CD8-positive, alpha-beta memory T cell (primary cell): ENCODE measurements at regions of chr12 and their contacts with region 1.

Region 1: DNA sequence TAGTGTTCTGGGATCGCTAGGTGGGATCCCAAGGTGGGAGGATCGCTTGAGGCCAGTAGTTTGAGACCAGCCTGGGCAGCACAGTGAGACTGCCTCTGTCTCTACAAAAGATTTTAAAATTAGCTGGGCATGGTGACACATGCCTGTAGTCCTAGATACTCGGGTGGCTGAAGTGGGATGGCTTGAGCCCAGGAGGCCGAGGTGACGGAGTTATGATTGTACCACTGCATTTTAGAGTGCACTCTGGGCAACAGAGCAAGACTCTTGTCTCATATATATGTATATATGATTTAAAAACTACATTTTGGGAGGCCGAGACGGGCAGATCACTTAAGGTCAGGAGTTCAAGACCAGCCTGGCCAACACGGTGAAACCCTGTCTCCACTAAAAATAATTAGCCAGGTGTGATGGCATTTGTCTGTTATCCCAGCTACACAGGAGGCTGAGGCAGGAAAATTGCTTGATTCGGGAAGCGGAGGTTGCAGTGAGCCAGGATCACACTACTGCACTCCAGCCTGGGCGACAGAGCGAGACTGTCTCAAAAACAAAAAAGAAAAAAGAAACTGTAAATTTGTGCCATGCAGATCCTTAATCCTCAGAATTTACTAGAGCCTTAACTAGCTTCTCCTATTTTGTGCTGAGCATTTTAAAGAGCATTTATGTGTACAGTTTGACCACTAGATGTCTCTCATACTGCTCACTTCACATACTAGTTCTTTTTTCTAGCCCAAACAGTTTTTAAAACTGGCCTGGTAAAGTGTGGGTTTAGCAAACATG is 114.8 kb downstream of the MON2 start:
- DNase-seq: peak in 2 of 5 donors; percentile 19 to 25
- H3K4me3 ChIP-seq: no peak overlapping the region
- H3K4me3 Mint-ChIP-seq: no peak overlapping the region
- H3K27ac ChIP-seq: no peak overlapping the region
- H3K27ac Mint-ChIP-seq: peak overlapping the region in 1 of 8 donors; percentile 29
- H3K4me1 ChIP-seq: no peaks in the 10 kb centered on the region
- H3K4me1 Mint-ChIP-seq: no peaks in the 10 kb centered on the region
- H3K27me3 ChIP-seq: no peaks in the 10 kb centered on the region
- H3K27me3 Mint-ChIP-seq: no peaks in the 10 kb centered on the region

Region 2: GRCh38 chr12:62530596-62530995 is 50.9 kb before region 1 on chr12:
- CTCF ChIA-PET with region 1: no interaction called
- POLR2A ChIA-PET with region 1: no interaction called
- DNase-seq: no peak
- H3K4me3 ChIP-seq: no peak overlapping the region
- H3K4me3 Mint-ChIP-seq: no peak overlapping the region
- H3K27ac ChIP-seq: no peak overlapping the region
- H3K27ac Mint-ChIP-seq: peak overlapping the region in 1 of 8 donors; percentile 30
- H3K4me1 ChIP-seq: no peaks in the 10 kb centered on the region
- H3K4me1 Mint-ChIP-seq: peaks cover 1 to 8% (median 3%) of the 10 kb centered on the region in 3 donors
- H3K27me3 ChIP-seq: no peaks in the 10 kb centered on the region
- H3K27me3 Mint-ChIP-seq: no peaks in the 10 kb centered on the region

Region 3: DNA sequence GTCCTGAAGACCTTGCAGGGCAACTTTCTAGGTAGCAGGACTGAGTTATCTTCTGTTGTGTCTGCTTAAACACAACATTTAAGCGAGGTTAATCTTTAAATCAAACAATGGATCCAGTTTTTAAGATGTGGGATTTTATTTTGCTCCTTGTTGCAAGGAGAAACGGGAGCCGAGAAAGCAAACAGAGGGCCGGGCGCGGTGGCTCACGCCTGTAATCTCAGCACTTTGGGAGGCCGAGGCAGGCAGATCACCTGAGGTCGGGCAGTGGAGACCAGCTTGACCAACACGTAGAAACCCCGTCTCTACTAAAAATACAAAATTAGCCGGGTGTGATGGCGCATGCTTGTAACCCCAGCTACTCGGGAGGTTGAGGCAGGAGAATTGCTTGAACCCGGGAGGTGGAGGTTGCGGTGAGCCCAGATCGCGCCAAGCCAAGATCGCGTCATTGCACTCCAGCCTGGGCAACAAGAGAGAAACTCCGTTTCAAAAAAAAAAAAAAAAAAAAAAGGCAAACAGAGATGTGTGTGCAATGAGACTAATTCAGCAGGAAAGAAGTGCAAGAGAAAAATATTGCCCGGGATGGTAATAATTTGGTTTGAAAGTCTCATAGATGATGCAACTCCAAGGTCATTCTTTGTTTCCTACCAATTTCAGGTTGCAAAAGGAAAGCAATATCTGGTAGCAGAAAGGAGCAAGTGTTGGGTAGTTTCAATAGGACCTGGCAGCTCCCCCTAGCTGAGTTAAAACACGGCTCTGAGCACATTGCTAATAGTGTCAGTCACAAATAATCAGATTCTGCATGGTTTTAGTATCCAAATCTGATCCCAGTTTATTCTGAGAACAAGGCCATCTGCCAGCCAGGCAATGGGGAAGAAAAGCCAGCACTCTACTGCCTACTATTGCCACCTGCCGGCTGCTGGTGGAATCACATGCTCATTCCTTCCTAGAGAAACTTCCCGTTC is 212.1 kb after region 1 on chr12:
- CTCF ChIA-PET with region 1: interaction called, 37 read pairs
- POLR2A ChIA-PET with region 1: no interaction called
- DNase-seq: peak; percentile 45 to 80 (median 56)
- H3K4me3 ChIP-seq: no peak overlapping the region
- H3K4me3 Mint-ChIP-seq: no peak overlapping the region
- H3K27ac ChIP-seq: no peak overlapping the region
- H3K27ac Mint-ChIP-seq: no peak overlapping the region
- H3K4me1 ChIP-seq: no peaks in the 10 kb centered on the region
- H3K4me1 Mint-ChIP-seq: no peaks in the 10 kb centered on the region
- H3K27me3 ChIP-seq: no peaks in the 10 kb centered on the region
- H3K27me3 Mint-ChIP-seq: peaks cover 2 to 12% of the 10 kb centered on the region in 2 donors

Region 4: DNA sequence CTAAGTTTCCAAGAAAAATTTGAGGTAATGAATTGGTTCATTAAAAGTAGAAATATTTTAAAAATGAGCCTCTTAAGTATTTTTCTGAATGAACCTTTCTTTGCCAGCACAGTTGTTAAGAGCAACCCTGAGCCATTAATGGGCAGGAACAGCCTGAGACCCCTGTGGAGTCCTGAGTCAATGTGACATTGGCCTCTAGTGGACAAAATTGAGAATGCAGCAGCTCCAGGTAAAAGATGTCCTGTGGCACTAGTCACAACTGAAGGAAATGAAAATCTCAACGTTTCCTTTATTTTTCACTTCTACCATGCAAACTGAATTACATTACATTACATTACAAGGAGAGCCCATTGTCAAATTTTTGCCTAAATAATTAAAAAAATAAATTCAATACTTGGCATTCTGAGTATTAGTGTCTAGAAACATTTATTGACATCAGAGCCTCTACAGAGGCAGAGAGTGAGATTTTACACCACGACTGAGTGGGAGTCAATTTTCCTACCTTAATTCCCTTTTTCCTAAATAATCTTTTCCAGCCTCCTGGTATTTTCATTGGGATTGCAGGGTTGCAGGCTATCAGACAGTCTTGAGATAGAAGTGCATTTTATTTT is 217.8 kb after region 1 on chr12:
- CTCF ChIA-PET with region 1: interaction called, 37 read pairs
- POLR2A ChIA-PET with region 1: no interaction called
- DNase-seq: peak; percentile 19 to 65 (median 27)
- H3K4me3 ChIP-seq: no peak overlapping the region
- H3K4me3 Mint-ChIP-seq: no peak overlapping the region
- H3K27ac ChIP-seq: no peak overlapping the region
- H3K27ac Mint-ChIP-seq: peak overlapping the region in 1 of 8 donors; percentile 7
- H3K4me1 ChIP-seq: no peaks in the 10 kb centered on the region
- H3K4me1 Mint-ChIP-seq: no peaks in the 10 kb centered on the region
- H3K27me3 ChIP-seq: no peaks in the 10 kb centered on the region
- H3K27me3 Mint-ChIP-seq: peaks cover 9 to 20% of the 10 kb centered on the region in 2 donors